Lower lobe of right lung (tissue), 2 donors: ENCODE measurements at regions of chr3 and their contacts with region 1.

Region 1: GRCh38 chr3:25648107-25648535 is 16.6 kb downstream of the TOP2B start:
- DNase-seq: no peak
- ATAC-seq: peak; percentile 97
- H3K4me3 ChIP-seq: no peak overlapping the region
- H3K27ac ChIP-seq: no peak overlapping the region
- H3K4me1 ChIP-seq: peaks cover 13% of the 10 kb centered on the region
- H3K27me3 ChIP-seq: no peaks in the 10 kb centered on the region
- CTCF ChIP-seq: peak; percentile 91

Region 2: GRCh38 chr3:25820366-25820765 is 172.2 kb after region 1 on chr3:
- intact Hi-C with region 1: no loop called
- DNase-seq: no peak
- ATAC-seq: peak; percentile 48 to 66
- H3K4me3 ChIP-seq: no peak overlapping the region
- H3K27ac ChIP-seq: no peak overlapping the region
- H3K4me1 ChIP-seq: no peaks in the 10 kb centered on the region
- H3K27me3 ChIP-seq: no peaks in the 10 kb centered on the region
- CTCF ChIP-seq: no peak

Region 3: DNA sequence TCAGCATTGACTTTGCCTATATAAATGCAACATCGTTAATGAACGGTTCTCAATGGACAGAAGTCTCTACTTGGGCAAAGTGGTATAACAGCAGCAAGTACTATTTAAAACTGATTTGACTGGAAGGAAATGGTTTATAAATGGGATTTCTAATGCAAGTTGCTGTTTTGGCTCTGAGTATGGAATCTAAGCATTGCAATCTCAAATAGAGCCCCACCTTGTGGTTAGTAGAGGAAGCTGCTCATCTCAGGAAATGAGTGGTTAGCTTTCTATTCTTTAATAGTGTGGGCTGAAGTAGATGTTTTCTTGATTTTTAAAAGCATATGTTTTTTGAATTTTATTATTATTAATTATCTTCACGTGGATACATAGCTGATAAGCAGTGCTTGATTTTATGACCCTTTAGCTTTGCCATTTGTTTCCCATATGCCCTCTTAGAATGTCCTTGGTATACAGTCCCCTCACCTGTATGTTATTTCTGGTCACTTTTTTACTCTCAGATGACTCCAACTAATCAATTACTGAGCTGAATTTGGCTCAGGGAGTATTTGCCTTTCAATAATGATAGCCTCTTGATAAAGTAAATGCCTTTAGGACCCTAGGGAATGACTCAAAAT is 208.9 kb after region 1 on chr3:
- intact Hi-C with region 1: loop called (anchors 5 kb)
- DNase-seq: no peak
- ATAC-seq: peak; percentile 64 to 65
- H3K4me3 ChIP-seq: no peak overlapping the region
- H3K27ac ChIP-seq: no peak overlapping the region
- H3K4me1 ChIP-seq: peaks cover 6% of the 10 kb centered on the region
- H3K27me3 ChIP-seq: no peaks in the 10 kb centered on the region
- CTCF ChIP-seq: peak; percentile 74